OCI-LY7 (cell line): ENCODE measurements at regions of chr9 and their contacts with region 1.

Region 1: GRCh38 chr9:100341889-100342288 is 10.9 kb downstream of the TEX10 start:
- DNase-seq: no peak
- H3K4me3 ChIP-seq: no peak overlapping the region
- H3K27ac ChIP-seq: no peak overlapping the region
- H3K4me1 ChIP-seq: peaks cover 14% of the 10 kb centered on the region
- CTCF ChIP-seq: no peak

Region 2: GRCh38 chr9:100308965-100309564 is 32.8 kb before region 1 on chr9:
- CTCF ChIA-PET with region 1: no interaction called
- POLR2A ChIA-PET with region 1: no interaction called
- intact Hi-C with region 1: loop called (anchors 1 kb)
- DNase-seq: no peak
- H3K4me3 ChIP-seq: no peak overlapping the region
- H3K27ac ChIP-seq: no peak overlapping the region
- H3K4me1 ChIP-seq: no peaks in the 10 kb centered on the region
- CTCF ChIP-seq: no peak

Region 3: DNA sequence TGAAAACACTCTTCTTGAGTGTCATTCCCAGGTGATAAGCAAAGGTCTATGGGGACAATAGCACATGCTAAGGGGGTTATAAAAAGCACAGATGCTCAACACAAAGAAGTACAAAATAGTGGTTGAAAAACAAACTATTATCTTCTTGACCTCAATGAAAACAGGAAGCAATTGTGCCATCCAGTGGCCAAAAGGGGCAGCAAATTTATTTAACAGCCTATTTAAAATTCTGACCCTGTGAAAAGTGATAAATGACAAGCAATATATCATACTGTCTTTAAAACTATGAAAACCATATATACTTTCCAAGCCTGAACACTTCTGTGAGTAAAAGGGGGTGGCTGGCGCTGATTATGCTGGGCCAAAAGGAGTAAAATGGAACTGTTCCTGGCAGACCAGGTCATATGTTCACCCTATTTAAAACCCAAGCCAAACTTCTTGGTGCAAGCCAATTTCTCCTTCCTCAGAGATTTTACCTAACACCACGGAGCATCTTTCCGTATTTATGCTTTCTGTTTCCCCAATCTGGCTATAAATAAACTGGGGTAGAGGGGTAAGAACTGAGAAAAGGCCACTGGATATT is 18.8 kb before region 1 on chr9:
- CTCF ChIA-PET with region 1: interaction called, 3 read pairs
- POLR2A ChIA-PET with region 1: interaction called, 18 read pairs
- intact Hi-C with region 1: no loop called
- DNase-seq: peak; percentile 55
- H3K4me3 ChIP-seq: no peak overlapping the region
- H3K27ac ChIP-seq: no peak overlapping the region
- H3K4me1 ChIP-seq: no peaks in the 10 kb centered on the region
- CTCF ChIP-seq: peak; percentile 89

Region 4: DNA sequence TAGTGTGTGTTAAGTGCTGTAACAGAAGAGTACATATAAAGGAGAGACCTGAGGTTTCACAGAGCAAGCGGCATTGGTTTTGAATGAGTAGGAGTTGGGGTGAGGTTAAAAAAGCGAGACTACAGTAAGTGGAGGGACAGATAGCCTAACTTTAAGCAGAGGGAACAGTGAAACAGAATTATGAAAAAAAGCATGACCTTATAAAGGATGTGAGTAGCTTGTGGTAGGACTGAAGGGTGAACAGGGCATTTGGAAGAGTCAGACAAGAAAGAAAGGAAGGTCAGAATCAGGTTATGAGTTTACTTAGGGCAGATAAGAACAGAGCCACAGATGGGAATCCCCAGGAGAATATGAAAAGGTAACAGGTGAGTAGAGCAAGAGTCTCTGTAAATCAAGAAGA is 107.5 kb after region 1 on chr9:
- CTCF ChIA-PET with region 1: no interaction called
- POLR2A ChIA-PET with region 1: no interaction called
- intact Hi-C with region 1: no loop called
- DNase-seq: no peak
- H3K4me3 ChIP-seq: no peak overlapping the region
- H3K27ac ChIP-seq: no peak overlapping the region
- H3K4me1 ChIP-seq: no peaks in the 10 kb centered on the region
- CTCF ChIP-seq: no peak